Activated CD8-positive, alpha-beta memory T cell treated with anti-CD3 and anti-CD28 coated beads, Interleukin-2, amount 10 ng/mL, durations not matched to agents 7 days and 5 days (primary cell): ENCODE measurements at regions of chr1 and their contacts with region 1.

Region 1: DNA sequence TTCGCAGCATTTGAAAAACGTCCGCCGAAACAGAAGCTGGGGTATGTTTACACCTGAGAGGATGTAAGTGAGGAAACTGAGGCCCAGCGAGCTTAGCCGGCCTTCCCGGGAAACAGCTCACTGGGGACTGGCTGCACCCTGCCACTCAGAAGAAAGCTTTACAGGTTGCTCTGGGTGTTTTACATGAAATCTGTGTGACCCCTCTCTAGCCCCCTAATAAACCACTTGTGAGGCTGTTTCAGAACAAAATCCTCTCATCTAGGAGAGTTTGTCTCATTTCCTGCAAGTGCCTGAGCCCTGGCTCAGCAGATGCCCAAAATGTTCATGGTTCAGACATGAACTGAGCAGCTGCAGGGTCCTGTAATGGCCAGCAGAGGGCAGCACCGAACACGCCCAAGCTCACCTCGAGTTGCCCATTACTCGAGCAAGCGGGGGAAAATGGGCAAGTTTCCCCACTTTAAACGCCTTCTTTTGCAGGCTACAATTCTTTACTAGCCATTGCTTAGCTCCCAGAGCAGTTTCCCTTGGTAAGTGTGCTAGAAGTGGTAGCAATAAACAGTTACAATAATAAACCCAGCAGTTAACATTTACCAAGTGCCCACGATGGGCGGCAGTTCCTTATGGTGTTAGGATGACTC is 76.4 kb downstream of the FHAD1 start:
- DNase-seq: peak; percentile 82
- ATAC-seq: peak; percentile 91
- H3K4me3 Mint-ChIP-seq: no peak overlapping the region
- H3K27ac Mint-ChIP-seq: no peak overlapping the region
- H3K4me1 Mint-ChIP-seq: no peaks in the 10 kb centered on the region
- H3K27me3 Mint-ChIP-seq: peaks cover 22% of the 10 kb centered on the region

Region 2: DNA sequence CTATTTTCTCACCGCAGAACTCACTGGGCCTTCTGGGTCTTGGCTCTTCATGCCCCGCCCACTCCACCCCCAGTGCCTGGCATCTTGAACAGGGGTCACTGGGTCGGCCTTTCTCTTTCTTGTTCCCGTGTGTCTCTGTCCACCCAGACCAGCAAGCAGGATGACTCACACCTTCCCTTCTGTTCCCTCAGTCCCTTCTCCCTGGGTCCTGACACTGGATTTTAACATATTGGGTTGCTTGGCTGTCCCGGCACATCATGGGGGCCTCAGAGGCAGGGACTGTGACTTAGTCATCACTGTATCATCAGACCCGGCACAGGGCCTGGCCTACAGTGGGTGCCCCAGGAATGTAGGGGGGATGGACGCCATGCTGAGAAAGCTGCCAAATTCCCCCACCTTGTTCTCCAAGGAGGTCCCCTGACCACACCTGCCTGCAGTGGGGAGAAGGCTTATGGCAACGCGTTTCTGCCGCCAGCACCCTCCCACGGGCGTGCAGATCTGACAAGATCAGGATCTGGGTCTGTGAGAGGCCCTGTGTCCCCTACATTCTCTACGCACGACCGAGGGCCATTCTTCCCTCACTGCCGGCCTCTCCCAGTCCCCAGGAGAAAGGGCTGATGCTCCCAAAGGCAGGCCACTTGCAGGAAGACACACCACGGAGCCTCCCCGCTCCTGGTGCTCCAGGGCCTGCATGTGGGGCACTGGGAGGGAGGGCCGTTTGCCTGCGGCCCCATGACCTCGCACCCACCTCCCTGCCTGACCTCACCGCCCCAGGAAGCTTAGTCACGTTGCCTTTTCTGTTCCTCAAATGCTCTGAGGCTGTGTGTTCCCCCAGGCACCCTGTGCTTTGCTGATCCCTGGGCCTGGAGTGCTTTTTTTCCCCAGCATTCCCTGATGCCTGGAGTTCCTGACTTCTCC is 327.1 kb before region 1 on chr1:
- CTCF ChIA-PET with region 1: no interaction called
- DNase-seq: no peak
- ATAC-seq: no peak
- H3K4me3 Mint-ChIP-seq: no peak overlapping the region
- H3K27ac Mint-ChIP-seq: no peak overlapping the region
- H3K4me1 Mint-ChIP-seq: no peaks in the 10 kb centered on the region
- H3K27me3 Mint-ChIP-seq: no peaks in the 10 kb centered on the region

Region 3: GRCh38 chr1:15153842-15154479 is 169.5 kb before region 1 on chr1:
- CTCF ChIA-PET with region 1: no interaction called
- DNase-seq: no peak
- ATAC-seq: no peak
- H3K4me3 Mint-ChIP-seq: no peak overlapping the region
- H3K27ac Mint-ChIP-seq: no peak overlapping the region
- H3K4me1 Mint-ChIP-seq: peaks cover 15% of the 10 kb centered on the region
- H3K27me3 Mint-ChIP-seq: peaks cover 64% of the 10 kb centered on the region

Region 4: GRCh38 chr1:15304701-15305467 is 18.6 kb before region 1 on chr1:
- CTCF ChIA-PET with region 1: interaction called, 19 read pairs
- DNase-seq: peak; percentile 72
- ATAC-seq: peak; percentile 57
- H3K4me3 Mint-ChIP-seq: no peak overlapping the region
- H3K27ac Mint-ChIP-seq: no peak overlapping the region
- H3K4me1 Mint-ChIP-seq: peaks cover 5% of the 10 kb centered on the region
- H3K27me3 Mint-ChIP-seq: peaks cover 14% of the 10 kb centered on the region

Region 5: DNA sequence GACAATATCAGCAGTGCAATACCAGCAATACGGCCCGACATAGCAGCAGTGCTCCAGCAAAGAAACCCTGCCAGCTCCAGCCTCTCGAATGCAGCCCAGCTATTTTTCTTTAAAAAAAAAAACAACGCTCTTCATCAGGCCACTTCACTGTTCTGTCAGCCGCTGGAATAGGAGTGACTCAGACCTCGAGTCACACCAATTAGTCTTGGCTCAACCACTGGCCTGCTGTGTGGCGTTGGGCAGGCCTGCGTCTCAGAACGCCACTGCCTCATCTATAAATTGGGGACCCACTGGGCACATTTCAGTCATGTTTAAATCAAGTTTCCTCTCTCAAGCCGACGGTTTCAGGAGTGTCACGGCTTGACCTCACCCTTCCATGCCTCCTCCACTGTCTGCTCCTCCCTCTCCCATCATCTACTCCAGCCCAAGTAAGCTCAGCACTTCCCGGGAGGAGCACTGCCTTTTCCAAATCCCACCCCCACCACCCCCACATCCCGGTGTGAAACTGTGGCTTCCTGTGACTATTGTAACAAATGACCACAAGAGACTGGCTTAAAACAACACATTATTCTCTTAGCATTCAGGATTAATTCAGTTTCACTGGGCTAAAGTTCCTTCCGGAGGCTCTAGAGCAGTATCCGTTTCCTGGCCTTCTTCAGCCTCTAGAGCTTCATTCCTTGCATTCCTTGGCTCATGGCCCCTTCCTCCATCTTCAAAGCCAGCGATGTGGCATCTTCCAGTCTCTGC is 14.4 kb after region 1 on chr1:
- CTCF ChIA-PET with region 1: interaction called, 16 read pairs
- DNase-seq: no peak
- ATAC-seq: no peak
- H3K4me3 Mint-ChIP-seq: no peak overlapping the region
- H3K27ac Mint-ChIP-seq: no peak overlapping the region
- H3K4me1 Mint-ChIP-seq: peaks cover 29% of the 10 kb centered on the region
- H3K27me3 Mint-ChIP-seq: peaks cover 17% of the 10 kb centered on the region

Region 6: GRCh38 chr1:15417365-15417934 is 94.0 kb after region 1 on chr1:
- CTCF ChIA-PET with region 1: interaction called, 29 read pairs
- DNase-seq: peak; percentile 71
- ATAC-seq: peak; percentile 55
- H3K4me3 Mint-ChIP-seq: peak overlapping the region; percentile 22
- H3K27ac Mint-ChIP-seq: peak overlapping the region; percentile 68
- H3K4me1 Mint-ChIP-seq: peaks cover 64% of the 10 kb centered on the region
- H3K27me3 Mint-ChIP-seq: no peaks in the 10 kb centered on the region

Region 7: GRCh38 chr1:15430787-15431570 is 107.5 kb after region 1 on chr1:
- CTCF ChIA-PET with region 1: interaction called, 153 read pairs
- DNase-seq: peak; percentile 74
- ATAC-seq: peak; percentile 71
- H3K4me3 Mint-ChIP-seq: no peak overlapping the region
- H3K27ac Mint-ChIP-seq: no peak overlapping the region
- H3K4me1 Mint-ChIP-seq: peaks cover 8% of the 10 kb centered on the region
- H3K27me3 Mint-ChIP-seq: no peaks in the 10 kb centered on the region